Cardiac septum (tissue), 1 donor: ENCODE measurements at regions of chr10 and their contacts with region 1.

Region 1: DNA sequence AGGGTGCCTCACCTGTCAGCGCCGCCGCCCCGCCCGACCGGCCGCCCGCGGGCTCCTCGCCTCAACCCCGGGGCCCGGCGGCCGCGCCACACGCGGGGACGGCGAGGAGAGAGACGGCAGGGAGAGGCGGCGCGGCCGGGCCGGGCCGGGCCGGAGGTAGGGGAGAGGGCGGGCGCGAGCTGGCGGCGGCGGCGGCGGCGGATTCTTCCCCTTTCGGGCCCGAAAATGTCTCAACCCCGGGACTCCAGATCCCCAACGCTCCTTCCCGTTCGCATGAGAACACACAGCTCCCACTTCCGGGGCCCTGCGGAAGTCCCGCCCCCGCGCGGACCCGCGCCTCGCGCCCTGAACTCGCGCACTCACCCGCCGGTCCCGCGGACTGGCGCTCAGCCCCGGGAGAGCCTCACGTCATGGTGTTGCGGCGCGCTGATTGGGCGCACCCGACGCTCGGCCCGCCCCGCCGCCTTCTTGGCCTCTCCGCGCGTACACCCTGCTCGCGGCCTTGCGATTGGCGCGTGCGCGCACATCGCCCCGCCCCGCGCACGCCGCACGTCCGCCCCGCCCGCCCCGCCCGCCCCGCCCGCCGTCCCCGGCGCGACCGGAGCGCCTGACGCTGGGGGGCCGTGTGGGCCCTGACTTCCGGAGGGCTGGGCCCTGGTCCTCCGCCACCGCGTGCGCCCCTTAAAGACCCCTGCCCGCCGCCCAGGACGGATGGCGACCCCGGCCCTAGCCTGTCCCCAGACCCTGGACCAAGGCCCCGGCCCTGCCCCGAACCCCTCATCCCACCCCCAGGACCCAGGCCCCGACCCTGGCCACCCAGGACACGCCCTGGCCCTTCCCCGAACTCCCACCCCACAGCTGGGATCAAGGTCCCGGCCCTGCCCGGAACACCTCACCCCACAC is at the start of gene LARP4B:
- DNase-seq: peak; percentile 99
- total RNA-seq, gene LARP4B: 69.8 TPM

Region 2: DNA sequence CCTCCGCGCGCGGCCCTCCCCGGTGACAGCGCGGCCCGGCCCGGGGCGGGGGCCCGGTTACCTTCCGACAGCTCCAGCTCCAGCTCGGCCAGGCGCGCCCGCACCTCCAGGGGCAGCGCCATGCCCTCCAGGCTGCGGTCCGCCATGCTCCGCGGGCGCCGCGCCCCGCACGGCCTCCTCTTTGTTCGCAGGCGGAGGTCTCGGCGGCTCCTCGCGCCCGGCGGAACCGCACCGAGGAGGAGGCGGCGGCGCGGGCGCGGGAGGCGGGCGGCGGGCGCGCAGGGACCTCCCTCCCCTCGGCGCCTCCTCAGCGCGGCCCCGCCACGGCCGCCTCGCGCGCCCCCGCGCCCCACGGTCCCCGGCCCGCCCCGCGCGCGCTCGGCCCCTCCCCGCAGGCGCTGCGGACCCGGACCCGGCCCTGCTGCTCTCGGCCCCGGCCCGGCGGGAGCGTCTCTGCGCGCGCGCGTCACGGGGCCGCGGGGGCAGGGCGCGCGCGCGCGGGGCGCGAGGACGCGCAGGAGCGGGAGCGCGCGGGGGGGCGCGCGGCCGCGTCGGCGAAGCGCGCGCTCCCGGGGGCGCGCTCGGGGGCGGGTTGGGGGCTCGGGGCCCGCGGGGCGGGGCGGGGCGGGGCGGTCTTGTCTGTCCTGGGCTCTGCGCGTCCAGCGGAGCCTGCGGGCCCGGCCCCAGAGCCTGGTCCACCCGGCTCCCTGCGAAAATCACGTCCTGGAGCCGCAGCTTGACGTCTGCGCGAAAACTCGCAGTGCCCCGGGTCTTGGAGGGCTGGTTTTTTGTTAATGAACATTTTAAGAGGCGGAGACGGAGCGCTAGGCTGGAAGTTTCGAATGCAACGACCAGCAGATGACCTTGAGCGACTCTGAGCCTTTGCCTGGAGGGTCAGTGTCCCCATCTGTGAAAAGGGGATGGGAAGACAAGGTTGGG is 242.0 kb before region 1 on chr10 and contains the start of gene DIP2C:
- intact Hi-C with region 1: loop called (anchors 10 kb)
- DNase-seq: no peak
- total RNA-seq, gene DIP2C: 28.8 TPM

Region 3: DNA sequence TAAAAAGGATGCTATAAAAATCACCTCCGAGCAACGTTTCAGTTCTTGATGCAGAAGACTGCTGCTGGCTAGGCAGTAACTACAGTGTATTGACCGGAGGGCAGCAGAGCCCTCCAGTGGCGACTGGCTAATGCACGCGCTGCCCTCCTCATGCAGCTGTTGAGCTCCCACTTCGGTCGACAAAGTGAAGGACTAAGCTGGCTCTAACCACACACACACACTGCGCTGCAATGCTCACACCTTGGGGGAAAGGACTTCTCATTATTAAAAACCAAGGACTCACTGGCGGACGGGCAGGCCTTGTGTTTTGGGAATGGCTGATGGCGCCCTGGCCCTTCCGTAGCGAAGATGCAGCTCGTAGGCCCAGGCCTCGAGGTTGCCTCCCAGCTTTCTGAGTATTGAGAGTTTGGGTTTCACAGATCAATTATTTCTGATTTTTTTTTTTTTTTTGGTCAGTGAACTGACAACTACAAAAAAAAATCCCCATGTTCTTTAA is 121.3 kb before region 1 on chr10:
- intact Hi-C with region 1: loop called (anchors 10 kb)
- DNase-seq: no peak

Region 4: DNA sequence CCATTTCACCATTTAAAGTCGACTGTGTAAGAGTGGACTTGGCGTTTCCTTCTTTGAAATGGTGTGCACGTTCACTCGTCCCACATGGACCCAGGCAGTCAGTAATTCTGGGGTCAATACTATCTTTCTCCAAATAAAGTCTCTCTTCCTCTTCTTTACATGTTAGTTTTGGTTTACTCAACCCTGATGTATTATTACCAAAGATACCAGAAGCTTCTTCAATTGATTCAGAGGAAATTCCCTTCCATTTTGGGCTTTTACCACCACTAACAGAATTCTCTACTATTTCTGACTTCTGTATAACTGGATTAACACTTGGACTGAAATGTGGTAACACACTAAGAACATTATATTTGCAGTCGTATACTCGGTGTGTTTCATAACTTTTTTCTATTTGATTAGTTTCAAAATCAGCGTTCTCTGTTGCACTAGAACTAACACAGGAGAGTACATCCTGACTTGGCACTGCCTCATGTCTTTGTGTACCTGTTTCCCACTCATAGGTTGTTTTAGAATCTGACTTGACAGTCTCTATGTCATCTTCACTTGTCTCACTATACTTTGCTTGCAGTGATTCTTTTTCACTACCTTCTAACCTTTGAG is 61.0 kb before region 1 on chr10:
- intact Hi-C with region 1: loop called (anchors 5 kb)
- DNase-seq: no peak

Region 5: GRCh38 chr10:987870-988666 is 56.4 kb after region 1 on chr10 and contains the start of gene GTPBP4:
- intact Hi-C with region 1: loop called (anchors 2 kb)
- DNase-seq: peak; percentile 99
- total RNA-seq, gene GTPBP4: 33.1 TPM

Region 6: GRCh38 chr10:1056326-1057105 is 124.8 kb after region 1 on chr10 and contains the start of gene WDR37:
- intact Hi-C with region 1: loop called (anchors 5 kb)
- DNase-seq: peak; percentile 93
- total RNA-seq, gene WDR37: 28.1 TPM

Region 7: GRCh38 chr10:1268831-1269230 is 337.2 kb after region 1 on chr10:
- intact Hi-C with region 1: no loop called
- DNase-seq: no peak